Transverse colon (tissue), 4 donors: ENCODE measurements at regions of chr3 and their contacts with region 1.

Region 1: GRCh38 chr3:15205934-15206661 is at the start of gene CAPN7:
- DNase-seq: peak; percentile 96
- H3K4me3 ChIP-seq: peak within 1 kb of the TSS; percentile 68 to 97 (median 78)
- H3K27ac ChIP-seq: peak within 1 kb of the TSS; percentile 95 to 98 (median 96)
- H3K4me1 ChIP-seq: peaks cover 4 to 34% (median 14%) of the 10 kb centered on the region in 4 donors
- H3K27me3 ChIP-seq: no peaks in the 10 kb centered on the region
- CTCF ChIP-seq: peak in 4 of 5 experiments; percentile 31 to 65 (median 42)
- EP300 ChIP-seq: no peak
- POLR2A ChIP-seq: peak; percentile 86
- total RNA-seq, gene CAPN7: 12.1 to 78.4 (median 48.8) TPM

Region 2: GRCh38 chr3:15108082-15108545 is 98.0 kb before region 1 on chr3:
- in situ Hi-C with region 1: loop called in 1 of 4 experiments (anchors 10 kb)
- intact Hi-C with region 1: loop called (anchors 5 kb)
- DNase-seq: peak; percentile 78
- H3K4me3 ChIP-seq: no peak overlapping the region
- H3K27ac ChIP-seq: no peak overlapping the region
- H3K4me1 ChIP-seq: peaks cover 1 to 8% (median 2%) of the 10 kb centered on the region in 4 donors
- H3K27me3 ChIP-seq: no peaks in the 10 kb centered on the region
- CTCF ChIP-seq: peak; percentile 78 to 93 (median 89)
- EP300 ChIP-seq: no peak
- POLR2A ChIP-seq: no peak

Region 3: DNA sequence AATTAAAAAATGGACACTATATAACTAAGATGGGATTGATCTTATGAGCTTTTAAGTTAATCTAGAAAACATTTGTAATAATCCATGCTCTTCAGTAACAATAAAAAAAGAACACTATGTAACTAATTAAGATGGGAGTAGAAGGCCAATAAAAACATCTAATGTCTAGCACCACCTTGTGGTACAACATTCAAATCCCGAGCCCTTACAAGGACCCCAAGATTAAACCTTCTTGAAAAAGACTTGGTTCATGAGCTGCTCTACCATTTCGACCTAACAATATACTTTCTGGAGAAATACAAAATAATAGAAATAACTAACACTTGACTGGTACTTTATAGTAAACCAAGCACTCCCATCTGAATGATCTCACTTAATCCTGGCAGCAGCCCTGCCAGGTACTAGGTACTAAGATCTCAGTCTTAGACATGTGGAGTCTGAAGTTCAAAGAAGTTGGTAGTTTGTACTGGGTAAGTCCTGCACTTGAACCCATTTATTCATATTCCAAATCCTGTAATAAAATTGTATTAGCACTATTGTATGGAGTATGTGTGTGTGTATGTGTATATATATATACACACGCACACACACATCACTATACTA is 199.5 kb after region 1 on chr3:
- in situ Hi-C with region 1: loop called in 1 of 4 experiments (anchors 5 kb)
- intact Hi-C with region 1: loop called (anchors 10 kb)
- DNase-seq: no peak
- H3K4me3 ChIP-seq: no peak overlapping the region
- H3K27ac ChIP-seq: no peak overlapping the region
- H3K4me1 ChIP-seq: peaks cover 0 to 3% (median 0%) of the 10 kb centered on the region in 4 donors
- H3K27me3 ChIP-seq: no peaks in the 10 kb centered on the region
- CTCF ChIP-seq: peak; percentile 55 to 75 (median 63)
- EP300 ChIP-seq: no peak
- POLR2A ChIP-seq: no peak

Region 4: GRCh38 chr3:15557511-15557946 is 351.4 kb after region 1 on chr3:
- in situ Hi-C with region 1: loop called in 2 of 4 experiments (anchors 25 kb)
- intact Hi-C with region 1: no loop called
- DNase-seq: peak; percentile 66
- H3K4me3 ChIP-seq: no peak overlapping the region
- H3K27ac ChIP-seq: peak overlapping the region in 1 of 4 donors; percentile 28
- H3K4me1 ChIP-seq: peaks cover 0 to 18% (median 2%) of the 10 kb centered on the region in 4 donors
- H3K27me3 ChIP-seq: no peaks in the 10 kb centered on the region
- CTCF ChIP-seq: peak; percentile 51 to 68 (median 64)
- EP300 ChIP-seq: no peak
- POLR2A ChIP-seq: no peak

Region 5: DNA sequence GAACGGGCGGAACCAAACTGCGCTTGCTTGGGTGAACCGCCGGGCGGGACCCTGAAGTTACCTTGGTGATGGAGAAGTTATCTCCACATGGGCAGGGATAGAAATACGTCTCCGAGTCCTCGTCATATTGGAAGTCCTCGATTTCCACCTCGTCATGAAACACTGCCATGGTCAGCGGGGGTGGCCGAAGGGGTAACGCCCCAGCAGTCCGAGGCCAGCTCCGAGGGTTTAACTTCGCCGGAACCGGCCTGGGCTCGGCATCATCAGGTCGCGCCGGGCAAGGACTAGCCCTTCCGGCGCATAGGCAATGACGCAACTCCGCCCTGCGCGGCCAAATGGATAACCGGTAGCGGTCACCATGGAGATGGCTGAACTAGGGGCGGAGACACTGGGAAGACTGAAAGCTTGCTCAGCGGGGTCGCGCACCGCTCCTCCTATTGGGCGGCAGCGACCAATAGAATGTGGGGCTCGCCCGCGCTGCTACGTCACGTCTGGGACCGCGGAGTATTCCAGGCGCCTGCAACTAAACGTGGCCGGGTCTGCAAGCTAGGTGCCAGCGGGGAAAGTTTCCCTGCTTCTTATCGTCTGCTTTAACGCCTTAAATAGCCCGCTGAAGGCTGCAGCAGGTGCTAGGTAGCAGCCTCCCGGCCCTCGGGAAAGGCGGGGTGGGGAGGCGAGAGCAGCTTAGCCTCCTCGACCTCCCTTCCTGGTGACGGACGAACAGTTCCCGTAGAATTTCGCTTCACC is 1058.8 kb after region 1 on chr3 and contains the starts of genes DPH3 and OXNAD1:
- in situ Hi-C with region 1: loop called in 1 of 4 experiments (anchors 25 kb)
- intact Hi-C with region 1: no loop called
- DNase-seq: peak; percentile 100
- H3K4me3 ChIP-seq: peak within 1 kb of the TSS; percentile 69 to 83 (median 76)
- H3K27ac ChIP-seq: peak within 1 kb of the TSS; percentile 92 to 97 (median 93)
- H3K4me1 ChIP-seq: peaks cover 7 to 47% (median 29%) of the 10 kb centered on the region in 4 donors
- H3K27me3 ChIP-seq: no peaks in the 10 kb centered on the region
- CTCF ChIP-seq: peak; percentile 2 to 79 (median 18)
- EP300 ChIP-seq: no peak
- POLR2A ChIP-seq: peak; percentile 92
- total RNA-seq, gene DPH3: 5.0 to 22.4 (median 12.4) TPM
- total RNA-seq, gene OXNAD1: 20.6 to 91.1 (median 40.0) TPM